Activated CD8-positive, alpha-beta memory T cell treated with anti-CD3 and anti-CD28 coated beads, Interleukin-2, amount 10 ng/mL, durations not matched to agents 7 days and 5 days (primary cell): ENCODE measurements at regions of chr1 and their contacts with region 1.

Region 1: DNA sequence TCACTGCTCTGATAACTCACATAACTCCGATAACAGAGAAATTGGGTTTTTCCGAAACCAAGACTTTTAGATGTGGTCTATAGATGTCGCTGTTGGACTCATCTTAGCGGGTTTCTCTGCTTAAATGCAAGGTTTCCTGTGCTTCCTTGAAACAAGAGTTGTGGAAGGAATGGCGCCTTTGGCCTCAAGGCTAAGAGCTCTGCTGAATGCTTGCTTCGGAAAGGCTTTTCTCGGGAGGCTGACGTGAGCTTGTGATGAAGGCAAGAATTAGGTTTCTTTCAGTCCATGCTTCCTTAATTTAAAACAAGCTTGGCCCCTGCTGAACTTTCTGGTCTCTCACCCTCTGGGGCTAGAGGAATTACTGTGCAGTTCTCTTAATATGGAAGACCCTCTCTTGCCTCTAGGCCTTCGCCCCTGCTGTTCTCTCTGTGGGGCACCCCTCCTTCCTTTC is 113.5 kb downstream of the MAP3K21 start:
- DNase-seq: no peak
- ATAC-seq: no peak
- H3K4me3 Mint-ChIP-seq: no peak overlapping the region
- H3K27ac Mint-ChIP-seq: no peak overlapping the region
- H3K4me1 Mint-ChIP-seq: no peaks in the 10 kb centered on the region
- H3K27me3 Mint-ChIP-seq: peaks cover 19% of the 10 kb centered on the region

Region 2: DNA sequence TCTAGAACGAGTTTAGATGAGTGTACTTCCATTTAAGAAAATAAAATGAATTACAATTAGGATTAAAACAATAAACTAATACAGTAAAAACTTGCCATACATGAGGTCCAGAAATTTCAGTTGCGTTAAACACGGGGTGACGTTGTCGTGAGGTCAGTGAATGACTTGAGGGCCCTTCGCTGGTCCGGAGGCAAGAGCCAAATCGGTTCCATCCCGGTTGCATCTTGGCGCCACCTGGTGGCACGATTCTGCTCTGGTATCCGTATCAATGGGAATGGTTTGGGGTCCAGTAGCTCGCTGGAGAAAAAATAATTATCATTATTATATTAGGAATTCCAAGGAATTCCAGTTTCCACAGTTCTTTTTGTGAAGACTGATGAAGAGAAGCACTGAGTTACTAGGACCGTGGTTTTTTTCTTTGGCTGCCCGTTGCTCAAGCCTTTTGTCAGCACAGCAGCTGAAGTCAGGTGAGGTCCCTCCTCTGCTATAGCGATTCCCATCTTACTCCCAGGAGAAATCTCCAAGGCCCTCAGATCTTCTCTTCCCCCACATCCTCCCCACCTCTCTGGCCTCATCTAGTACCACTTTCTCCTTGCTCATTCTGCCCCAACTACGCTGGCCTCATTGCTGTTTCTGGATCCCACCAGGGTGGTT is 624.9 kb after region 1 on chr1:
- CTCF ChIA-PET with region 1: interaction called, 20 read pairs
- DNase-seq: peak; percentile 69
- ATAC-seq: no peak
- H3K4me3 Mint-ChIP-seq: no peak overlapping the region
- H3K27ac Mint-ChIP-seq: no peak overlapping the region
- H3K4me1 Mint-ChIP-seq: no peaks in the 10 kb centered on the region
- H3K27me3 Mint-ChIP-seq: no peaks in the 10 kb centered on the region